ENCODE measurements at regions of chr6 and their contacts with region 1.

Region 1: DNA sequence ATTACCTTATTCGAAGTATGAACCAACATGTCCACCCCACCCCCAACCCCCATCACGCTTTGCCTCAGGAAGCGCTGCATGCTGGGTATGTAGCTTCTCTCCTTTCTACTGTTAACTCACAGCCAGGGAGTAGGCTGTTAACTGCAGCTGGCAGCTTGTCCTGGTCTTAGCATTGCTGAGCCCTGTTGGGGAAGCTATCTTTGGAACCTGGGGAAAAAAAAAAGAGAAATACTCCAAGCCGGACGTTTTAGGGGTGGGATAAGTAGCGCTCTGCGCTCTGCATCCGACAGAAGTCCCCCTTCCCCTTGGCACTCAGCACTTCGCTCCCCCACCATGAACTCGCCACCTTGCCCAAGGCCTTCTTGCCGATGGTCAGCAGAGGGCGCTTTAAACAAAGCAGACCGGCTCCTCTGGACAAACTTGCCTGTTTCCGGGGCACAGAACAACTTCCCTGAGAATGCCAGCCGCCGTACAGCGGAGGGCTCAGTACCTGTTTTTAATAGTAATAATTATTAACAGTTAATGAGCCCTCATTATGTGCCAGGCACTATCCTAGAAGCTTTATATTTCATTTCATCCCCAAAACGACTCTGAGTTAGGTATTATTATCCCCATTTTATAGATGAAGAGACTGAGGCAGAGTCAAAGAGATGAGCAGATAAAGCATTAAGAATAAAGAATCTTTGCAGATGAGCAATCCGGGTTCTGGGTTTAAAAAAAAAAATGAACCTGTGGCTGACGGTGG is 35.2 kb upstream of the MDFI start:
- DNase-seq: peak; percentile 89 to 97 (median 92)
- H3K4me3 ChIP-seq: peak overlapping the region in 2 of 3 donors; percentile 18 to 28
- H3K27ac ChIP-seq: no peak overlapping the region
- H3K4me1 ChIP-seq: no peaks in the 10 kb centered on the region
- H3K27me3 ChIP-seq: no peaks in the 10 kb centered on the region
- CTCF ChIP-seq: peak; percentile 91

Region 2: DNA sequence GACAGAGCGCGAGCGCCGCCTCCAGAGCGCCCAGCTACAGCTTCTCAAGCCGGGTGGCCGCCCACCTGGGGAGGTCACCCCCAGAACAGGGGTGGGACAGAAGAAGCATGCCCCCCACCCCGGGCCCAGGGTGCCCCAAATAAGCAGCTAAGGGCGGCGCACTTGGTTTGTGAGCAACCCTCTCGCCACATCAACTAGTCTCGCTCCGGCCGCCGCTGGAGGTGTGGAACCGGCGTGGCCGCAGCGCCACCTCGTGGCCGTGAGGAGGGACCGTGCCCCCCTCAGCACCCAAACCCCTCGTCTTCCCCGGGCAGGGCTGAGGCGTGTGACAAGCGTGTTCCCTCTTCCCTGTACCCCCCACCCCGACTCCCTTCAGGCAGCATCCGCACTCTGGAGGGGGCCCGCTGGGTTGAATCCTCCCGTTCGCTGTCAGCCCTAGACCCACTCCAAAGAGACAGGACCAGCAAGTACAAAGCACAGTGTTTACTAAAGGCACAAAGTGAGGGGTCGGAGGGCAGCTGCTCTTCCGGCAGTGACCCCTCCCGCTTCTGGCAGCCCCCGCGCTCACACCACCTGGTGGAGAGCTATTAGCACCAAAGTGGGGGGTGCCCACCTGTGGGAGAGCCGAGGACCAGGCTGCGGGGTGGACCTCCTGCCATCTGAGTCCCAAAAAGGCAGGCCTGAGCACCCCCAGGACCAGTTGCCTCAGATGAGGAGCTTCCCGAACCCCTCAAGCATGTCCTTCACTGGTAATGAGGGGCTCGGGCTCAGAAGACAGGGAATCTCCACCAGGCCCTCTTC is 80.7 kb after region 1 on chr6:
- intact Hi-C with region 1: loop called (anchors 5 kb)
- DNase-seq: peak; percentile 82 to 92 (median 91)
- H3K4me3 ChIP-seq: peak overlapping the region in 1 of 3 donors; percentile 44
- H3K27ac ChIP-seq: peak overlapping the region; percentile 62 to 83
- H3K4me1 ChIP-seq: peaks cover 0 to 21% (median 6%) of the 10 kb centered on the region in 3 donors
- H3K27me3 ChIP-seq: no peaks in the 10 kb centered on the region
- CTCF ChIP-seq: peak; percentile 85

Region 3: DNA sequence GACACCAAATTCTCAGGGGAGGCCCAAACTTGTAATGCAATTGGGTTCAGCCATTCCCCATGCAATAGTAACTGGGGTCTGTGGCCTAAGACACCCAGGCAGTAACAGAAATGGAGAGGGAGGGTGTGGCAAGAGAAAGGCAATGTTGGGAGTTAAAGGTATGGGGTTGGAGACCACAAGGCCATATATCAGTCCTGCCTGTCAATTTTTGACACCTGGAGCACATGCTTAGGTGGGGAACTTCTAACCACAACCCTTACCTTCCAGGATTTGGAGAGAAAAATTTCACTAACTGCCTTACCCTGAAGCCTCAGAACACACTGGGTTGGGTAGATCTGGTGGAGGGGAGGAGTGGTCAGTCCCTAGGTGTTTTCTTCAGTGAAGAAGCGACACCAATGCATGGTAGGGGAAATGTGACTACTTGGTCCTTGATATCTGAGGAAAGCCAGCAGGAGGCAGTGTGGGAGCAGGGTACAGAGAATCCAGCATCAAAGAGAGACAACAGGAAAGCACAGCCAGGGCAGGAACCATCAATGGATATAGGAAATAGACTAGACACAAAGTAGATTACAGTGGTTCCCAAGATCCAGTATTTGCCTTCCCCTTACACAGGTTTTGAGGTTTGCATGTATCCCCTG is 299.0 kb after region 1 on chr6:
- intact Hi-C with region 1: no loop called
- DNase-seq: peak in 1 of 5 donors; percentile 10
- H3K4me3 ChIP-seq: no peak overlapping the region
- H3K27ac ChIP-seq: no peak overlapping the region
- H3K4me1 ChIP-seq: no peaks in the 10 kb centered on the region
- H3K27me3 ChIP-seq: no peaks in the 10 kb centered on the region
- CTCF ChIP-seq: peak; percentile 21